Posterior vena cava (tissue), 2 donors: ENCODE measurements at regions of chr18 and their contacts with region 1.

Region 1: GRCh38 chr18:12628706-12629702 is 28.9 kb downstream of the SPIRE1 start:
- DNase-seq: no peak

Region 2: GRCh38 chr18:12552884-12553242 is 76.1 kb before region 1 on chr18:
- intact Hi-C with region 1: loop called in 1 of 2 experiments (anchors 10 kb)
- DNase-seq: no peak

Region 3: DNA sequence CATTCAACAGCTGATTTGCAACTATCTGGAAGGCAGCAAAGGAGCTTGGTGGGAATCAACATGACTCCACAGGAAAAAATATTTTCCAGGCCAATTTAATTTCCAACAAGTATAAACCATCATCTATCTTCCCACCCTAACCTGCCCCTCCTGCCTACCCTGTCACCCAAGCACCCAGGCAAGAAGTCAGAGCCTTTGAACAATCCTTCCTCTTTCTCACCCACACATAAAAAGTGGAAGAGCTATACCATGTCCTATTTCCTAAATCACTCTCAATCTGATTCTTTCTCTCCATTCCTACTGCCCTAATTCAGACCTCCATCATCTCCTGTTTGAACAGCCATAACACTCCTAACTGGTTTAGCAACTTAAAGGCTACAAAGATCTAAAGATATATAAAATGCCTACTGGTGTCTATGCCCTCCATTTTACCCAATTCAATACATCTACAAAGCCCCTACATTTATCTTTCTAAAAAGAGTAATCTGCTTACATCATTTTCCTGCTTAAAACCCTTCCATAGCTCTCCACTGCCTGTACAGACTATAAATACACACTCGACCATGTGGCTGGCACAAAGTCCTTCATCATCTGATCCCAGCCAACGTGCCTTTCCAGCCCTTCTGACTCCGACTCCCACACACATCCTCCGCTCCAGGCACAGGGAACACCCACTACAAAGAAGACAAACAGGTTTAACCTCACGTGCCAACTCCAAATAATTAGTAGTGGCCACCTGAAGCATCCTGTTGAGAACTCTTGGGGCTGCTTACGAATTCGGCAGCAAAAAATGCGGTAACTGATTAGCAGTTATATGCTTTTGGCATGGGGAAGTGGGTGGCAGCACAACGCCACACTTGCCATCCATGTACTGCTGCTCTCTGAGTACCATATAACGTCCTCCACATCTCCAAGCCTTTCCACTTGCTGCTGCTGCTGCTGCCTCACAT is 16.5 kb after region 1 on chr18:
- intact Hi-C with region 1: no loop called
- DNase-seq: no peak